Dendritic cell treated with granulocyte-macrophage colony-stimulating factor and Interleukin-4, amounts not matched to agents 40 ng/mL and 50 ng/mL, for 4 days (primary cell): ENCODE measurements at regions of chr3 and their contacts with region 1.

Region 1: GRCh38 chr3:196620161-196620604 is 19.3 kb upstream of the NRROS start:
- H3K4me3 Mint-ChIP-seq: peak overlapping the region; percentile 55
- H3K27ac Mint-ChIP-seq: peak overlapping the region; percentile 88
- H3K4me1 Mint-ChIP-seq: peaks cover 69% of the 10 kb centered on the region
- H3K27me3 Mint-ChIP-seq: no peaks in the 10 kb centered on the region

Region 2: DNA sequence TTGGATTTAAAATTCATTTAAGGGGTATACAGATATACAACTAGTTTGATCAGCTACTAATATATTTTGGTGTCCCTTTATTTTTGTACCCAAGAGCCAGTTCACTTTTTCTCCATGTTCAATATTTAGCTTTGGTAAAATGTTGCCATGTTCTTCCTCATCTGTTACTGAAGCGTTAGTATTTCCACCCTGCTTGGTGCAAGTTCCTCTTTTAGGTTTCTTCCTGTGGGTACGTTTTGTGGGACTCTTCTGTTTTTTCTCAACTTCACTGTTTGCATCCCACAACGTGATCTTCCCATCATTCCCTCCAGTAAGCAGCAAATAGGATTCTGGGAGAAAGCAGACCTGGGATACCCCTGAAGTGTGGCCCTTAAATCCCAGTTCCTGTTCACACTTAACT is 66.0 kb before region 1 on chr3:
- intact Hi-C with region 1: no loop called
- H3K4me3 Mint-ChIP-seq: no peak overlapping the region
- H3K27ac Mint-ChIP-seq: peak overlapping the region; percentile 54
- H3K4me1 Mint-ChIP-seq: peaks cover 19% of the 10 kb centered on the region
- H3K27me3 Mint-ChIP-seq: no peaks in the 10 kb centered on the region

Region 3: GRCh38 chr3:196634224-196634623 is 14.0 kb after region 1 on chr3:
- intact Hi-C with region 1: loop called (anchors 1 kb)
- H3K4me3 Mint-ChIP-seq: peak overlapping the region; percentile 88
- H3K27ac Mint-ChIP-seq: peak overlapping the region; percentile 97
- H3K4me1 Mint-ChIP-seq: peaks cover 80% of the 10 kb centered on the region
- H3K27me3 Mint-ChIP-seq: no peaks in the 10 kb centered on the region

Region 4: DNA sequence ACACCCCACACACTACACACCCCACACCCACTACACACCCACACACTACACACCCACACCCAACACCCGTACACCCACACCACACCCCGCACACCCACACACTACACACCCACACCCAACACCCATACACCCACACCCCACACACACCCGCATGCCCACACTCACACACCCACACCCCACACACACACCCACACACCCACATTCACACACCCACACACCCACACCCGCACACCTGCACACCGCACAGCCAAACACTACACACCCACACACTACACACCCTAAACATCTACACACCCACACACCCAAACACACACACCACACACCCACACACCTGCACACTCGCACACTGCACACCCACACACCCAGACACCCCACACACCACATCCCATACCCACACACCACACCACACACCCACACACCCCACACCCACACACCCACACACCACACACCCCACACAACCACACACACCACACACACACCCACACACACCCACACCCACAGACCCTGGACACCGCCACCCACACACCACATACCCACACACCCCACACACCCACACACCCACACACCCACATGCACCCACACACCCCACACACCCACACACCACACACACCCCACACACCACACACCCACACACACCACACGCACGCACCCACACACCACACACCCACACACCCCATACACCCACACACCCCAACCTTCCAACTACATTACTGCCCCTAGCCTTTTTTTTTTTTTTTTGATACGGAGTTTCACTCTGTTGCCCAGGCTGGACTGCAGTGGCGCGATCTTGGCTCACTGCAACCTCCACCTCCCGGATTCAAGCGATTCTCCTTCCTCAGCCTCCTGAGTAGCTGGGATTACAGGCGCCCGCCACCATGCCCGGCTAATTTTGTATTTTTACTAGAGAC is 75.0 kb after region 1 on chr3:
- intact Hi-C with region 1: no loop called
- H3K4me3 Mint-ChIP-seq: no peak overlapping the region
- H3K27ac Mint-ChIP-seq: peak overlapping the region; percentile 63
- H3K4me1 Mint-ChIP-seq: peaks cover 52% of the 10 kb centered on the region
- H3K27me3 Mint-ChIP-seq: no peaks in the 10 kb centered on the region